ENCODE measurements at regions of chr19 and their contacts with region 1.

Region 1: DNA sequence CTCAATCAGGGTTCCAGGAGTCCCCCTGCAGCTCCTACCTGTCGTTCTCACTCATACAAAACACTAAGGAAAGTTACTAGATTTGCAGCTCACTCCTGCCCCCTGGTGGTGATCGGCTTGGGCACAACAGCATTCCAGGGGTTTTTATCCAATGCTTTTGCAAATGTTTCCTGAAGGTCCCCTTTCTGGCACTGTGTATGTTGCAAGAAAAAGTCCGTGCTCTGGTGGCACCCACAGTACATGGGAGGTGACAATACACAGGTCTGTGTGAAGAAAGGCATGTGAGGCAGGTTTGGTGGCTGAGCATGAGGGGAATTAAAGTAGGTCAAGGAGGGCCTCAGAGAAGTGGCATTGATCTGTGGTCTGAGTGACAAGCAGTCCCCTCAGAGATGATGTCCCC is 8.6 kb upstream of the TYK2 start:
- DNase-seq: peak; percentile 64 to 92 (median 84)
- ATAC-seq: peak; percentile 65
- H3K4me3 ChIP-seq: no peak overlapping the region
- H3K4me3 Mint-ChIP-seq: no peak overlapping the region
- H3K27ac ChIP-seq: no peak overlapping the region
- H3K27ac Mint-ChIP-seq: no peak overlapping the region
- H3K4me1 ChIP-seq: no peaks in the 10 kb centered on the region
- H3K4me1 Mint-ChIP-seq: peaks cover 5% of the 10 kb centered on the region
- H3K27me3 ChIP-seq: no peaks in the 10 kb centered on the region
- H3K27me3 Mint-ChIP-seq: no peaks in the 10 kb centered on the region
- CTCF ChIP-seq: peak; percentile 95

Region 2: GRCh38 chr19:10259162-10259905 is 129.6 kb before region 1 on chr19:
- CTCF ChIA-PET with region 1: interaction called, 671 read pairs
- POLR2A ChIA-PET with region 1: interaction called, 3 read pairs
- intact Hi-C with region 1: loop called (anchors 1 kb)
- DNase-seq: peak; percentile 68 to 93 (median 86)
- ATAC-seq: peak; percentile 98
- H3K4me3 ChIP-seq: no peak overlapping the region
- H3K4me3 Mint-ChIP-seq: no peak overlapping the region
- H3K27ac ChIP-seq: no peak overlapping the region
- H3K27ac Mint-ChIP-seq: no peak overlapping the region
- H3K4me1 ChIP-seq: no peaks in the 10 kb centered on the region
- H3K4me1 Mint-ChIP-seq: peaks cover 5% of the 10 kb centered on the region
- H3K27me3 ChIP-seq: no peaks in the 10 kb centered on the region
- H3K27me3 Mint-ChIP-seq: no peaks in the 10 kb centered on the region
- CTCF ChIP-seq: peak; percentile 58

Region 3: DNA sequence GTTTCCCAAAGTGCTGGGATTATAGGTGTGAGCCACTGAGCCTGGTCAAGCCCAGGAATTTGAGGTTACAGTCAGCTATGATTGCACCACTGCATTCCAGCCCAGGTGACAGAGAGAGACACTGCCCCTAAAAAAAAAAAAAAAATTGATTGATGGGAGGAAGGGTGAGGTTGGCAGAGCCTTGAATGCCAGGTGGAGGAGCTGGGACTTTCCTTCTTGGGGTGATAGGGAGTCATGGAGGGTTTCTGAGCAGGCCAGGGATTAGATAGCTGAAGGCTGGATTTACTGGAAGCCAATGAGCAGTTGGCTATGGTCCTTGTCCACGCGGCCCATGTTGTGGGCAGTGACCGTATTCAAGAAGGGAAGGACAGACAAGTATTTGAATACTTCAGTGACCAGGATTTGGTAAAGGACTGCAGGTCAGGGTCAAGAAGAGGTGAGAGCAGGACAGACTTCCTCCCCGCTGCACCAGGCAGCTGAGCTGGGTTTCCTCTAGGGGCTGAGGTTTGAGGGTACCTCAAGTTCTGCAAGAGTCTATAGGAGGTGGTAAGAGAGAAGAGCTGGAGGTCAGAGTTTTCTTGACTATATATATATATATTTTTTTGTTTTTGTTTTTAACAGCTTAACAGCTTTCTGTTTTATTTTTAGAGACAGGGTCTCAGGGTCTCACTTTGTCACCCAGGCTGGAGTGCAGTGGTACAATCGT is 109.1 kb before region 1 on chr19:
- CTCF ChIA-PET with region 1: interaction called, 44 read pairs
- POLR2A ChIA-PET with region 1: interaction called, 3 read pairs
- intact Hi-C with region 1: no loop called
- DNase-seq: peak in 1 of 9 experiments; percentile 44
- ATAC-seq: peak; percentile 38
- H3K4me3 ChIP-seq: no peak overlapping the region
- H3K4me3 Mint-ChIP-seq: peak overlapping the region; percentile 8
- H3K27ac ChIP-seq: peak overlapping the region in 1 of 2 experiments; percentile 54
- H3K27ac Mint-ChIP-seq: peak overlapping the region; percentile 52
- H3K4me1 ChIP-seq: no peaks in the 10 kb centered on the region
- H3K4me1 Mint-ChIP-seq: peaks cover 15% of the 10 kb centered on the region
- H3K27me3 ChIP-seq: no peaks in the 10 kb centered on the region
- H3K27me3 Mint-ChIP-seq: no peaks in the 10 kb centered on the region
- CTCF ChIP-seq: no peak

Region 4: GRCh38 chr19:10292206-10292788 is 96.7 kb before region 1 on chr19:
- CTCF ChIA-PET with region 1: interaction called, 12 read pairs
- POLR2A ChIA-PET with region 1: interaction called, 3 read pairs
- intact Hi-C with region 1: no loop called
- DNase-seq: peak; percentile 41 to 79 (median 69)
- ATAC-seq: peak; percentile 45
- H3K4me3 ChIP-seq: peak overlapping the region; percentile 47 to 51
- H3K4me3 Mint-ChIP-seq: peak overlapping the region; percentile 80
- H3K27ac ChIP-seq: no peak overlapping the region
- H3K27ac Mint-ChIP-seq: no peak overlapping the region
- H3K4me1 ChIP-seq: peaks cover 79% of the 10 kb centered on the region
- H3K4me1 Mint-ChIP-seq: peaks cover 70% of the 10 kb centered on the region
- H3K27me3 ChIP-seq: peaks cover 58 to 78% of the 10 kb centered on the region in 2 experiments
- H3K27me3 Mint-ChIP-seq: peaks cover 59% of the 10 kb centered on the region
- CTCF ChIP-seq: no peak

Region 5: GRCh38 chr19:10372690-10373089 is 16.3 kb before region 1 on chr19:
- CTCF ChIA-PET with region 1: interaction called, 26 read pairs
- POLR2A ChIA-PET with region 1: no interaction called
- intact Hi-C with region 1: no loop called
- DNase-seq: no peak
- ATAC-seq: no peak
- H3K4me3 ChIP-seq: no peak overlapping the region
- H3K4me3 Mint-ChIP-seq: no peak overlapping the region
- H3K27ac ChIP-seq: no peak overlapping the region
- H3K27ac Mint-ChIP-seq: no peak overlapping the region
- H3K4me1 ChIP-seq: no peaks in the 10 kb centered on the region
- H3K4me1 Mint-ChIP-seq: peaks cover 9% of the 10 kb centered on the region
- H3K27me3 ChIP-seq: no peaks in the 10 kb centered on the region
- H3K27me3 Mint-ChIP-seq: no peaks in the 10 kb centered on the region
- CTCF ChIP-seq: no peak

Region 6: DNA sequence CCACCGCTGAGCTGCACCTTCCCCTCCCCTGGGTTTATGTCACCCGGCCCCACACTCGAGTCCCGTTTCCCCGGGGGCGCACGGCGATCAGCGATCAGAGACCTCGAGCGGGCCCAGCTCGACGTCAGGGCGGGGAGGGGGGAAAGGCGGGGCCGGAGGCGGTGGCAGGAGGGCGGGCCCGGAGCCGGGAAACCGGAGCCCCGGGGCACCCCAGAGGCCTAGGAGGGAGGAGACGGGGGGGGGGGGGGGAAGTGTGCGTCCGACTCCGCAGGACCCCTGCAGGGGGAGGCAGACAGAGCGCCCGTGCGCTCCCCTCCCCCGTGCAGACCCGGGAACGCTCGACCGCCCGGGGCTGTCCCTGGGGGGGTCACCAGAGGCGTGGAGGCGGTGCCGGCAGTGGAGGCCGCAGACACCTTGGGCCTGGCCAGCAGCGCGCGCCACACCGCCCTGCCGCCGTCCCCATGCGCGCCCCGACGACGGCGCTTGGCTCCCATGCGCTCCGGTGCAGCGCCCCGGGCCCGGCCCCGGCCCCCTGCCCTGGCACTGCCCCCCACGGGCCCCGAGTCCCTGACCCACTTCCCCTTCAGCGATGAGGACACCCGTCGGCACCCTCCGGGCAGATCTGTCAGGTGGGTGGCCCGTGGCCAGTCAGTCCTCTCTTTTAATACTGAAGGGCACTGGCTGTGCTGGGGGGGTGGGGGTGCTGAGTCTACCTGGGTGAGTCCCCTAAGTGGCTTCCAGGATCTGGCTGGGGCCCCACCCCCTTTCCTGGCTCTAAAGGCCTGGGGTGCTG is 43.2 kb after region 1 on chr19:
- CTCF ChIA-PET with region 1: interaction called, 5 read pairs
- POLR2A ChIA-PET with region 1: no interaction called
- intact Hi-C with region 1: loop called in 1 of 2 experiments (anchors 1 kb)
- DNase-seq: peak in 8 of 9 experiments; percentile 60 to 90 (median 78)
- ATAC-seq: peak; percentile 35
- H3K4me3 ChIP-seq: peak overlapping the region; percentile 44 to 52
- H3K4me3 Mint-ChIP-seq: peak overlapping the region; percentile 87
- H3K27ac ChIP-seq: peak overlapping the region; percentile 43 to 77
- H3K27ac Mint-ChIP-seq: peak overlapping the region; percentile 92
- H3K4me1 ChIP-seq: peaks cover 37% of the 10 kb centered on the region
- H3K4me1 Mint-ChIP-seq: peaks cover 50% of the 10 kb centered on the region
- H3K27me3 ChIP-seq: peaks cover 0 to 7% of the 10 kb centered on the region in 2 experiments
- H3K27me3 Mint-ChIP-seq: peaks cover 23% of the 10 kb centered on the region
- CTCF ChIP-seq: no peak

Region 7: GRCh38 chr19:10461047-10461790 is 72.3 kb after region 1 on chr19:
- CTCF ChIA-PET with region 1: no interaction called
- POLR2A ChIA-PET with region 1: no interaction called
- intact Hi-C with region 1: no loop called
- DNase-seq: peak; percentile 61 to 92 (median 83)
- ATAC-seq: peak; percentile 85
- H3K4me3 ChIP-seq: peak overlapping the region; percentile 42 to 48
- H3K4me3 Mint-ChIP-seq: peak overlapping the region; percentile 61
- H3K27ac ChIP-seq: no peak overlapping the region
- H3K27ac Mint-ChIP-seq: no peak overlapping the region
- H3K4me1 ChIP-seq: peaks cover 6% of the 10 kb centered on the region
- H3K4me1 Mint-ChIP-seq: peaks cover 7% of the 10 kb centered on the region
- H3K27me3 ChIP-seq: no peaks in the 10 kb centered on the region
- H3K27me3 Mint-ChIP-seq: no peaks in the 10 kb centered on the region
- CTCF ChIP-seq: no peak

Region 8: DNA sequence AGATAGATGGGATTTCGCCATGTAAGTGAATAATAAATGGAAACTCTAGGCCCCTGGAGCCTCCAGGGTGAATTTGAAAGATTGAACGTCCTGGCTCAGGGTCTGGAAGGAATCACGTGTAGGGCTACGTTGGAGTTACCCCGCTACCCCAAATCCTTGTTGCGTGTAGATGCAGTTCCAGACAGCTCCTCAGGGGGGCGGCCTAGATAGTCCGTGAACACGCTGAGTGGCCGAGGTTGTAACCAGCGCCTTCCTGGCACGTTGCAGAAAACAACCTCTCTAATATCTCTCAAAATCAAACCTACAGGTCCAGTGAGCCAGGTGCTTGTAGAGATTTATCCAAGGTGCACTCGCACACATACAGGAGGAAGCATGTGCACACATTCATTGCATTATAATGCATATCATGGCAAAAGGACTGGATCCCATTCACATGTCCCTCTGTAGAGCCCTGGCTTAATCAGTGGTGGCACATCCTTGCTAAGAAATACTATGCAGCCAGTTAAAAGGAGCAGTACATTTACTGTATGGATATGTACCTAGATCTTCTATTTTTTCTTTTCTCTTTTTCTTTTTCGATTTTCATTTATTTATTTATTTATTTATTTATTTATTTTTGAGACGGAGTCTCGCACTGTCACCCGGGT is 116.7 kb after region 1 on chr19:
- CTCF ChIA-PET with region 1: no interaction called
- POLR2A ChIA-PET with region 1: no interaction called
- intact Hi-C with region 1: no loop called
- DNase-seq: peak; percentile 69 to 88 (median 83)
- ATAC-seq: peak; percentile 63
- H3K4me3 ChIP-seq: no peak overlapping the region
- H3K4me3 Mint-ChIP-seq: peak overlapping the region; percentile 55
- H3K27ac ChIP-seq: no peak overlapping the region
- H3K27ac Mint-ChIP-seq: peak overlapping the region; percentile 3
- H3K4me1 ChIP-seq: peaks cover 25% of the 10 kb centered on the region
- H3K4me1 Mint-ChIP-seq: peaks cover 29% of the 10 kb centered on the region
- H3K27me3 ChIP-seq: no peaks in the 10 kb centered on the region
- H3K27me3 Mint-ChIP-seq: peaks cover 2% of the 10 kb centered on the region
- CTCF ChIP-seq: peak; percentile 80

Measured in CD8-positive, alpha-beta T cell (primary cell).